Panc1 (cell line): ENCODE measurements at regions of chr15 and their contacts with region 1.

Region 1: GRCh38 chr15:98713585-98714001 is 65.3 kb downstream of the IGF1R start:
- DNase-seq: no peak
- ATAC-seq: no peak
- H3K4me3 ChIP-seq: no peak overlapping the region
- H3K27ac ChIP-seq: no peak overlapping the region
- H3K4me1 ChIP-seq: peaks cover 39% of the 10 kb centered on the region
- H3K27me3 ChIP-seq: no peaks in the 10 kb centered on the region
- CTCF ChIP-seq: no peak

Region 2: DNA sequence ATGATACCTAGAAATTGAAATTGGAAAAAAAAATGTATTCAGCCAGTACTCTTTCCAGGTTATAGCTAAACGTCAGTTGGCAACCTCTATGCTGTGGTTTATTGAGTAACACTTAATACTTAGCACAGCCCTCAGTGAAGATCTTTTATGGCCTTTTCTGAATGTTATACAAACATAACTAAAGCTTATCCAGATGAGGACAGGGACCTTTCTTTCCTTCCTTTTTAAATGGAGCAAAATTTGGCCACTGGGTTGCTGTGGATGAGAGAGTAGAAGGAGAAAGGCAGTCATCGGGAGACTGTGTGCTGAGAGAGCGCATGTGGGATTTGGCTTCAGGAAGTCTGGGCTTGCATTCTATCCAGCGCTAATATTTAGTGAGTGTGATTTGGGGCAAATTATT is 29.2 kb before region 1 on chr15:
- CTCF ChIA-PET with region 1: no interaction called
- POLR2A ChIA-PET with region 1: interaction called, 14 read pairs
- in situ Hi-C with region 1: no loop called
- intact Hi-C with region 1: no loop called
- DNase-seq: no peak
- ATAC-seq: no peak
- H3K4me3 ChIP-seq: no peak overlapping the region
- H3K27ac ChIP-seq: peak overlapping the region; percentile 48; the same call in 1 of the 2 replicates
- H3K4me1 ChIP-seq: peaks cover 54% of the 10 kb centered on the region
- H3K27me3 ChIP-seq: no peaks in the 10 kb centered on the region
- CTCF ChIP-seq: no peak

Region 3: GRCh38 chr15:98753726-98754671 is 40.4 kb after region 1 on chr15:
- CTCF ChIA-PET with region 1: no interaction called
- POLR2A ChIA-PET with region 1: no interaction called
- in situ Hi-C with region 1: no loop called
- intact Hi-C with region 1: no loop called
- DNase-seq: peak; percentile 24
- ATAC-seq: peak; percentile 83
- H3K4me3 ChIP-seq: peak overlapping the region; percentile 49 to 70
- H3K27ac ChIP-seq: peak overlapping the region; percentile 96
- H3K4me1 ChIP-seq: peaks cover 31% of the 10 kb centered on the region
- H3K27me3 ChIP-seq: no peaks in the 10 kb centered on the region
- CTCF ChIP-seq: no peak

Region 4: GRCh38 chr15:98769867-98770266 is 56.3 kb after region 1 on chr15:
- CTCF ChIA-PET with region 1: no interaction called
- POLR2A ChIA-PET with region 1: no interaction called
- in situ Hi-C with region 1: no loop called
- intact Hi-C with region 1: no loop called
- DNase-seq: no peak
- ATAC-seq: no peak
- H3K4me3 ChIP-seq: no peak overlapping the region
- H3K27ac ChIP-seq: peak overlapping the region; percentile 21; the same call in 1 of the 2 replicates
- H3K4me1 ChIP-seq: peaks cover 42% of the 10 kb centered on the region
- H3K27me3 ChIP-seq: no peaks in the 10 kb centered on the region
- CTCF ChIP-seq: no peak